GM10248 (cell line): ENCODE measurements at regions of chr2 and their contacts with region 1.

Region 1: GRCh38 chr2:69436938-69437750 is at the start of gene NFU1:
- DNase-seq: peak; percentile 98
- CTCF ChIP-seq: peak; percentile 52

Region 2: DNA sequence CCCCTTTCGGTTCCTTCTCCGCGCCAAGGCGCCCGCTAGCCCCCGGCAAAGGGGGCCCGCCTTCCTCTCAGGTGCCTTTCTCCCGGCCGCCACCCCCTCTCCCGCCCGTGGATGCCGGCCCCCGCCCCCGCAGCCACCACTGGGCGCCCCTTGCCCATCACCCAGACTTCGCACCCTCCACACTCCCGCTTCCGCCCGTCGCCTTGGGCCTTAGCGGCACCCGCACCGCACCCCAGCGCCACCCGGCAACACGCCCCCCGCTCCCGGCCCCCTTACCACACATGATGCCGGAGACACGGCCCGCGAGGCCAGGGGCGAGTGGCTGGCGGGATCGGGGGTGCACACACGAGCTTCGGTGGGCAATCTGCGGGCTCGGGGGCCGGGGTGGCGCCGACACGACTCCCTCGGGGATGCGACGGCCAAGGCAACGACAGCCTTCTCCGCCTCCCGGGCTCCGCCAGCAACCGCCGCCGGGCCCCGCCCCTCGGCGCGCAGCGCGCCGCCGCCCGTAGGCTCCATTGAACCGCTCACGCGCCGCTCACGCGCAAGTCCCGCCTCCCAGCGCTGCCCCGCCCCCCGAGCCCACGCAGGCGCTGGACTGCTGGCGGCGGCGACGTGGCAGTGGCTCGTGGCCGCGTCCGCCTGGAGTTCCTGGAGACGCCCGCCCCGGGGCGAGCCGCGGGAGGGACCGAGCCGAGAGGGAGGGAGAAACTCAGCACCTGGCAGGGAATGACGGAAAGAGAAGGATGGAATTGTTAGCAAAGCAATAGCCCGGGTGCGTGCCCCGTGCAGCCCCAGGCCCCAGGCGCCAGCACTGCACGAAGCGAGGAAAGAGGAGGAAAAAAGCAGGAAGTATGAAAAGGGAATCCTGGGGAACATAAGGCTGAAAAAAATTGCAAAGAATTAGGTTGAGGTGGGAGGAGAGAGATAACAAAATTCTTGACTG is 50.1 kb before region 1 on chr2 and contains the start of gene GFPT1:
- CTCF ChIA-PET with region 1: interaction called, 13 read pairs
- POLR2A ChIA-PET with region 1: interaction called, 3 read pairs
- DNase-seq: peak; percentile 96
- CTCF ChIP-seq: no peak

Region 3: DNA sequence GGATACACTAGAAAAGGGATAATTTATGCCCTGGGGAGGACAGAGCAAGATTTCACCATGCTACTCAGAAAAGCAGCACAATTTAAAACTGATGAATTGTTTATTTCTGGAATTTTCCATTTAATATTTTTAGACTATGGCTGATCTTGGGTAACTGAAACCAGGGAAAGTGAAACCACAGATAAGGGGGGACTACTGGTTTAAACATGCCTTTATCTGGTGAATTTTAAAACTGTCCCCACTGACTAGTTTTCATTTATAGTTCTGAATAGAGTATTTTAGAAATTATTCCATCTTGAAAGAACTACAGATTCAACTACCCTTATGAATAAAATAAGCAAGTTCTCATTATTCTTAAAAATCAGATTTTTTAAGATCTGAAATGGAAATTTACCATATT is 14.9 kb before region 1 on chr2:
- CTCF ChIA-PET with region 1: interaction called, 14 read pairs
- POLR2A ChIA-PET with region 1: no interaction called
- DNase-seq: no peak
- CTCF ChIP-seq: no peak